ENCODE measurements at regions of chr19 and their contacts with region 1.

Region 1: GRCh38 chr19:49473868-49474544 is at the start of gene FLT3LG:
- DNase-seq: peak; percentile 84 to 98 (median 92)
- H3K4me3 ChIP-seq: peak within 1 kb of the TSS; percentile 75
- H3K4me3 Mint-ChIP-seq: peak within 1 kb of the TSS; percentile 90 to 98 (median 95)
- H3K27ac ChIP-seq: peak within 1 kb of the TSS; percentile 74
- H3K27ac Mint-ChIP-seq: peak within 1 kb of the TSS; percentile 95 to 100 (median 98)
- H3K4me1 ChIP-seq: peaks cover 61% of the 10 kb centered on the region
- H3K4me1 Mint-ChIP-seq: peaks cover 44 to 65% (median 48%) of the 10 kb centered on the region in 3 donors
- H3K27me3 ChIP-seq: no peaks in the 10 kb centered on the region
- H3K27me3 Mint-ChIP-seq: peaks cover 0 to 4% of the 10 kb centered on the region in 2 donors
- total RNA-seq, gene FLT3LG: 63.9 to 71.5 TPM

Region 2: DNA sequence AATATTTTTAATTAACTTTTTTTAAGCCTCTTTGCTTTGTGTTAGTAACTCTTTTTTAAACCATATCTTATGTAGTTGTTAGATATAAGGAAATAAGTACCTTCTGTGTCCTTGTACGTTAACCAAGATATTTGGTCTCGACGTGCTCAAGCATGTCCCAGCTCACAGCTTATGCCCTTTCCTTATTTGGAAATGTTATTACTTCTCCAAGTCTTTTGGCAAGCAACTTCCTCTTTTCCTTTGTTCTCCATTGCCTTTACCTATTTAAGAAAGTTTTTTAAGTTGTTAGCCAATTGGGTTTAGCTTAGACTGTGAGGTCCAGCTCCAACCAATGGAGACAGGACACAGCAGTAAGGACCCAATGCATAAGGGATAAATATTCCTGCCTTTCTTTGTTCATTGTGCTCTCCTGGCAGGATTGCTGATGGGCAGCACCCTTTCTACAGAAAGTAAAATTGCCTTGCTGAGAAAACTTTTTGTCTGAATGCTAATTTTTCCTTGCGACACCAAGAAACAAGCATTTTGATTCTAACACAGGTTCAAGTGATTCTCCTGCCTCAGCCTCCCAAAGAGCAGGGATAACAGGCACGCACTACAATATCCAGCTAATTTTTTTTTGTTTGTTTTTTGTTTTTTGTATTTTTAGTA is 105.2 kb before region 1 on chr19:
- CTCF ChIA-PET with region 1: no interaction called
- POLR2A ChIA-PET with region 1: no interaction called
- DNase-seq: no peak
- H3K4me3 ChIP-seq: no peak overlapping the region
- H3K4me3 Mint-ChIP-seq: no peak overlapping the region
- H3K27ac ChIP-seq: no peak overlapping the region
- H3K27ac Mint-ChIP-seq: no peak overlapping the region
- H3K4me1 ChIP-seq: peaks cover 5% of the 10 kb centered on the region
- H3K4me1 Mint-ChIP-seq: no peaks in the 10 kb centered on the region
- H3K27me3 ChIP-seq: peaks cover 2% of the 10 kb centered on the region
- H3K27me3 Mint-ChIP-seq: peaks cover 12 to 17% of the 10 kb centered on the region in 2 donors

Region 3: DNA sequence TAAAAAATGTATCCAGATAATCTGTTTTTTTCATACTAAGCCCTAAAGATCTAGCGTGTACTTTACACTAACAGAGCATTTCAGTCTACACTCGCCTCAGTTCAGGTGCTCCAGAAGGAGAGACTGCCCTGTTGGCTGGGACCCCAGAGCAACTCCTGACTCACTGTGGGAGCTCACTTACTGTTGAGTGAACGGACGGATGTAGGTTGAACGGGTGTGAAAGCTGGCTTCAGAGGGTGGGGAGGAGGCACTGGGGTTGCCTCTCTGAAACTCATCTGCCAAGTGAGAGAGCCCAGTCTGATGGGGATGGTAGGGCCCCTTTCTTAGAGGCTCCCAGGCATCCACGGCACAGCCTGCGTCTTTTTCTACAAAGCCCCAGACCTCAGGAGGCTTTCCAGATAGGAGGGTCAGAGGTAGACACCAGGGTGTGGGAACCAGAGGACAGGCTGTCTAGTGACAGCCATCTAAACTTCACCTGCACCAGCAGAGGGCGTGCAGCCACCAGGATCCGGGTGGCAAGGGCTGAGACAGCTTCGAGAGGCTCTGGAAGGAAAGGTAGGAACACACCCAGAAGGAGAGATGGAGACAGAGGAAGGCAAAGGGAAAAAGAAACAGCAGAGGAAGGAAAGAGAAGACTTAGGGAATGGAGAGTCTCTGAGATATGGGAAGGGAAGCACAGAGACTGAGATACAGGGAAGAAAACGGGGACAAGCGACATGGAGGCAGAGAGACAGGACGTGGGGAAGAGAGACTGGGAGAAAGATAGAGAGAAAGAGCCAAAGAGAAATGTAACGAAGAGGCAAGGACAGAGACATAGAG is 82.2 kb before region 1 on chr19:
- CTCF ChIA-PET with region 1: interaction called, 35 read pairs
- POLR2A ChIA-PET with region 1: interaction called, 7 read pairs
- DNase-seq: peak; percentile 63 to 86 (median 71)
- H3K4me3 ChIP-seq: no peak overlapping the region
- H3K4me3 Mint-ChIP-seq: peak overlapping the region in 1 of 7 donors; percentile 37
- H3K27ac ChIP-seq: peak overlapping the region; percentile 21
- H3K27ac Mint-ChIP-seq: peak overlapping the region; percentile 2 to 92 (median 61)
- H3K4me1 ChIP-seq: peaks cover 9% of the 10 kb centered on the region
- H3K4me1 Mint-ChIP-seq: peaks cover 11 to 20% (median 19%) of the 10 kb centered on the region in 3 donors
- H3K27me3 ChIP-seq: no peaks in the 10 kb centered on the region
- H3K27me3 Mint-ChIP-seq: no peaks in the 10 kb centered on the region

Region 4: GRCh38 chr19:49451430-49452181 is 22.4 kb before region 1 on chr19 and contains the start of gene PIH1D1:
- CTCF ChIA-PET with region 1: interaction called, 51 read pairs
- POLR2A ChIA-PET with region 1: interaction called, 62 read pairs
- DNase-seq: peak; percentile 88 to 97 (median 93)
- H3K4me3 ChIP-seq: peak within 1 kb of the TSS; percentile 99
- H3K4me3 Mint-ChIP-seq: peak within 1 kb of the TSS; percentile 93 to 100 (median 98)
- H3K27ac ChIP-seq: peak within 1 kb of the TSS; percentile 99
- H3K27ac Mint-ChIP-seq: peak within 1 kb of the TSS; percentile 80 to 100 (median 100)
- H3K4me1 ChIP-seq: peaks cover 48% of the 10 kb centered on the region
- H3K4me1 Mint-ChIP-seq: peaks cover 43 to 69% (median 48%) of the 10 kb centered on the region in 3 donors
- H3K27me3 ChIP-seq: no peaks in the 10 kb centered on the region
- H3K27me3 Mint-ChIP-seq: no peaks in the 10 kb centered on the region
- total RNA-seq, gene PIH1D1: 132 to 138 TPM

Region 5: GRCh38 chr19:49487277-49488045 is 13.5 kb after region 1 on chr19 and contains the start of gene RPL13A:
- CTCF ChIA-PET with region 1: interaction called, 14 read pairs
- POLR2A ChIA-PET with region 1: interaction called, 6 read pairs
- DNase-seq: peak; percentile 99 to 100 (median 99)
- H3K4me3 ChIP-seq: peak within 1 kb of the TSS; percentile 93
- H3K4me3 Mint-ChIP-seq: peak within 1 kb of the TSS; percentile 86 to 99 (median 97)
- H3K27ac ChIP-seq: peak within 1 kb of the TSS; percentile 92
- H3K27ac Mint-ChIP-seq: peak within 1 kb of the TSS; percentile 88 to 97 (median 94)
- H3K4me1 ChIP-seq: peaks cover 38% of the 10 kb centered on the region
- H3K4me1 Mint-ChIP-seq: peaks cover 40 to 59% (median 47%) of the 10 kb centered on the region in 3 donors
- H3K27me3 ChIP-seq: no peaks in the 10 kb centered on the region
- H3K27me3 Mint-ChIP-seq: no peaks in the 10 kb centered on the region
- total RNA-seq, gene RPL13A: 3,865 to 3,912 TPM

Region 6: DNA sequence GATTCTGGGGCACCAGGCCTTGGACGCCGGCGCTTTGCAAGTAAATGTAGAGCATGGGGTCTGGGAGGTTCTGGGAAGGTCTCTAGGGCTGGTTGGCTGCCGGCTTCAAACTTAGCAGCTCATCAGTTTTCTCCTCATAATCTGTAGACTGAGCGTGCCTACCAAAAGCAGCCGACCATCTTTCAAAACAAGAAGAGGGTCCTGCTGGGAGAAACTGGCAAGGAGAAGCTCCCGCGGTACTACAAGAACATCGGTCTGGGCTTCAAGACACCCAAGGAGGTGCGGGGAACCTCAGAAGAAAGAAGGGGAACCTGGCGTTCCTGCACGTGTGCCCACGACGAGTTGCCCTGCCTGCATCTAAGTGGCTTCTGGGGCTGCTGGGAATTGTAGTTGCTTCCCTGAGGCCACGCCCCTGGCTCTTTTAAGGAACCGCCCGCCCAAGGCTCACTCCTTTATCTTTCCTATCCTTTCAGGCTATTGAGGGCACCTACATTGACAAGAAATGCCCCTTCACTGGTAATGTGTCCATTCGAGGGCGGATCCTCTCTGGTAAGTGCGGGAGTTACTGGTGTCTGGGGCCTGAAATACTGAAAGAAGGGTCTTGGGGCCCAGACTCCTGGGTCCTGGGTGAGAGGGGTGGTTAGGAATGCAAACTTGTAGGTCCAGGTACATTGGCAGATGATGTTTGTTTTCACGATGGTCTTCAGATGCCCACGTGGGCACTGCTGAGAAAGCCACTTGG is 23.2 kb after region 1 on chr19:
- CTCF ChIA-PET with region 1: interaction called, 14 read pairs
- POLR2A ChIA-PET with region 1: interaction called, 8 read pairs
- DNase-seq: peak; percentile 66 to 83 (median 74)
- H3K4me3 ChIP-seq: peak overlapping the region; percentile 95
- H3K4me3 Mint-ChIP-seq: peak overlapping the region; percentile 95 to 100 (median 100)
- H3K27ac ChIP-seq: peak overlapping the region; percentile 94
- H3K27ac Mint-ChIP-seq: peak overlapping the region; percentile 88 to 99 (median 98)
- H3K4me1 ChIP-seq: peaks cover 49% of the 10 kb centered on the region
- H3K4me1 Mint-ChIP-seq: peaks cover 58 to 70% (median 67%) of the 10 kb centered on the region in 3 donors
- H3K27me3 ChIP-seq: no peaks in the 10 kb centered on the region
- H3K27me3 Mint-ChIP-seq: peaks cover 0 to 19% of the 10 kb centered on the region in 2 donors

Region 7: DNA sequence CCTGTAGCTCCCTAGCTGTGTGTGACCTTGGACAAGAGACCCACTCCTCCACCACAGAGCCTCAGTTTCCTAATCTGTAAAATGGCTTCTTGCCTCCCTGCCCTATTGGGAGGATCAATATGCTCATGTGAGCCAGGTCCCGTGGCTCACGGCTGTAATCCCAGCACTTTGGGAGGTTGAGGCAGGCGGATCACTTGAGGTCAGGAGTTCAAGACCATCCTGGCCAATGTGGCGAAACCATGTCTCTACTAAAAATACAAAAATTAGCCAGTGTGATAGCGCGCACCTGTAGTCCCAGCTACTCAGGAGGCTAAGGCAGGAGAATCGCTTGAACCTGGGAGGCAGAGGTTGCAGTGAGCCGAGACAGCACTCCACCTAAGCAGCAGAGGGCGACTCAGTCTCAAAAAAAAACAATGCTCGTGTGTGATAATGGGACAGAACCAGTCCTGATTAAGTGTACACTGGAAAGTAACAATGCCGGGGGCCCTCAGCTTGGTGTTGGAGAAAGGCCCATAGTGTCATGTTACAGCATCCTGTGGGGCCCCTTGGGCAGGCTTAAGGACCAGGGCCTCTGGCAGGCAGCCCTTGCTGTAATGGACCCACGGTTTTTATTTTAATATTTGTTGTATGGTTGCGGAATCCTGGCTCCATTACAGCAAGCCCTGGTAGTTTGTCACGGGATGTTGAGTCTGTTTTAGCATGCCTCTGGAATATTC is 29.0 kb after region 1 on chr19:
- CTCF ChIA-PET with region 1: interaction called, 10 read pairs
- POLR2A ChIA-PET with region 1: interaction called, 8 read pairs
- DNase-seq: peak in 3 of 5 donors; percentile 21 to 59 (median 59)
- H3K4me3 ChIP-seq: no peak overlapping the region
- H3K4me3 Mint-ChIP-seq: peak overlapping the region in 6 of 7 donors; percentile 5 to 45 (median 24)
- H3K27ac ChIP-seq: no peak overlapping the region
- H3K27ac Mint-ChIP-seq: peak overlapping the region; percentile 88 to 99 (median 96)
- H3K4me1 ChIP-seq: peaks cover 44% of the 10 kb centered on the region
- H3K4me1 Mint-ChIP-seq: peaks cover 38 to 48% (median 44%) of the 10 kb centered on the region in 3 donors
- H3K27me3 ChIP-seq: no peaks in the 10 kb centered on the region
- H3K27me3 Mint-ChIP-seq: peaks cover 0 to 10% of the 10 kb centered on the region in 2 donors

Measured in CD8-positive, alpha-beta memory T cell (primary cell).